Left cardiac atrium (tissue), 4 donors: ENCODE measurements at regions of chr9 and their contacts with region 1.

Region 1: DNA sequence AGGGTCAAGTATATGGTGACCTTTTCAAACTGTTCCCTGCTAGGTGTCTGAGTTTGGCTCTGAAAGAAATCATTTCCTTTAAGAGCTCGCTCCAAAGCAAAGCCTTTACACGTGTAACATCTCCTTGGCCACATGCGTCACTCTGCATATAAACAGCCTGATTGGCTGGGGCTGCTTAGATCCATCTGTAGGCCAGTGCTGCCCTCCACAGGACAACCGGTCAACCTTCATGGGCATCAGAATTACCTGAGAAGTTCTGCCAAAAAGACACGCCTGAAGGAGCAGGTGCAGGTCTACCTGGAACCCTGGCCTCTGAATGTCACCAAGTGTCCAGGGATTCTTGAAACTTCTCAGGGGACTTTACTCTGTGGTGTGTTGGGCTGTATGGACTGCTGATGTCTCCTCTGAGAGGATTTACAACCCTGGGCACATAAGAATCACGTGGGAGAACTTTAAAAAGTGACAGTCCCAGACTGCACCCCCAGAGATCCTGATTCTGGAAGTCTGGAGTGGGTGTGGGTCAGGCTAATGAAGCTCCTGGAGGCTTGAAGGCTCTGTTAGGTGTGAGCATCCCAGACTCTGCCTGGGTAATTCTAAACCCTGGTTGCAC is 497.6 kb downstream of the GADD45G start:
- DNase-seq: peak; percentile 85
- ATAC-seq: peak; percentile 93

Region 2: DNA sequence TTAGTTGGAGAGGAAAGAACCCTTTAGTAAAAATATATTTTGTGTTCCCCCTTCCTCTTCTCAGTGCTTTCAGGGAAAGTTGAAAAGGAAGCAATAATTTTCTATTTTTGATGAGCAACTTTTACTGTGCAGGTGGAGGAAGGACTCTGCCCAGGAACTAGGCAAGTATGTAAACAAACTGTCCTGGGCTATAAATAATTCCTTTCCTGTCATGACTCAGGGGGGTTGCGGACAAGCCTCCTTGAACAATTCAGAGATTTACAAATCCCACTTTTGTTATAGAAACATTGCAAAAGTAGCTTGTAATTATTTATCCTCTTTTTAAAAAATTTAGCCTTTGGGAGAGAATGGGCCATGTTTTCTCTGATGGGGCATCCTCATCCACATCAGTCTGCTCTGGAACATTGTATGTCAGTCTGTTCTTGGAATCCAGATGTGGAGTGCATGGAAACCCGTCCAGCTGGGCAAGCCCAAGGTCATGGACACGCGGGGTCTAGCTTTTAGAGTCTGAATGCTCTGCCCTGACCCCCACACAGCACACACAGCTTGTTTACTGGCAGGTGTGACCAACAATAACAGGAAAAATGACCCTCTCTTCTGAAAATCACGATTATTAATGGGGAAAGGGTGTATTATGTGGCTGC is 370.0 kb before region 1 on chr9:
- intact Hi-C with region 1: loop called in 1 of 2 experiments (anchors 5 kb)
- DNase-seq: no peak
- ATAC-seq: peak in 1 of 2 donors; percentile 33

Region 3: GRCh38 chr9:89750147-89750861 is 352.1 kb before region 1 on chr9:
- intact Hi-C with region 1: loop called in 1 of 2 experiments (anchors 10 kb)
- DNase-seq: peak; percentile 59
- ATAC-seq: peak; percentile 69 to 71

Region 4: DNA sequence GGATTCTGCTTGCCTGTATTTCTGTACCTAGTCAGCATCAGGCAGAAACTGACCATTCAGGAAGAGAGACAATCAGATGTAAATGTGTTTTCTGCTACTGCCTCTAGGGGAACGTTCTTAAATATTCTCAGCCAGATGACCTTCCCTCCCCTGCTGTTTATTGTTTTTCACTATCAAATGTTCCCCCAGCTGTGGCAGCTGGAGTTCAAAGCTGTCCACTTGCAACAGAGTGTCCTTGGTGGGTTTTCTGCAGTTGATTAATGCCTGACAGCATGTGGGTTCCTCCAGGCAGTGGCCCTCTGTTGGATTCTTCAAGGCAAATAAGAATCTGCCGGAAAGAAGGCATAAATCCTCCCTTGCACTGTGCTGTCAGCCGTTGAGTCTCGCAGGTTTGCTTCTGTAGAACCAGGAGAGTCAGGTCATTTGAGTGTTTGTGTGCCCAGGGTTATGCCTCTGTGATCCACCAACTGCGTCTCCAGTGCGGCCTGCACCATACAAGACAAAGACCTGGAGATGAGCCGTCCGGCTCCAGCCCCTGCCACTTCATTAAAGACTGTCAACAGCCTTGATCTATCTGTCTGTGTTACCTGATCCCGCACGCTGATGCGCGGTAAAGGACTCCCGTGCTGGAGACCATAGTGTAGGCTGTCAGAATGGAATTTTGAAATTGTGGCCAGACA is 294.2 kb before region 1 on chr9:
- intact Hi-C with region 1: loop called in 1 of 2 experiments (anchors 10 kb)
- DNase-seq: no peak
- ATAC-seq: no peak

Region 5: DNA sequence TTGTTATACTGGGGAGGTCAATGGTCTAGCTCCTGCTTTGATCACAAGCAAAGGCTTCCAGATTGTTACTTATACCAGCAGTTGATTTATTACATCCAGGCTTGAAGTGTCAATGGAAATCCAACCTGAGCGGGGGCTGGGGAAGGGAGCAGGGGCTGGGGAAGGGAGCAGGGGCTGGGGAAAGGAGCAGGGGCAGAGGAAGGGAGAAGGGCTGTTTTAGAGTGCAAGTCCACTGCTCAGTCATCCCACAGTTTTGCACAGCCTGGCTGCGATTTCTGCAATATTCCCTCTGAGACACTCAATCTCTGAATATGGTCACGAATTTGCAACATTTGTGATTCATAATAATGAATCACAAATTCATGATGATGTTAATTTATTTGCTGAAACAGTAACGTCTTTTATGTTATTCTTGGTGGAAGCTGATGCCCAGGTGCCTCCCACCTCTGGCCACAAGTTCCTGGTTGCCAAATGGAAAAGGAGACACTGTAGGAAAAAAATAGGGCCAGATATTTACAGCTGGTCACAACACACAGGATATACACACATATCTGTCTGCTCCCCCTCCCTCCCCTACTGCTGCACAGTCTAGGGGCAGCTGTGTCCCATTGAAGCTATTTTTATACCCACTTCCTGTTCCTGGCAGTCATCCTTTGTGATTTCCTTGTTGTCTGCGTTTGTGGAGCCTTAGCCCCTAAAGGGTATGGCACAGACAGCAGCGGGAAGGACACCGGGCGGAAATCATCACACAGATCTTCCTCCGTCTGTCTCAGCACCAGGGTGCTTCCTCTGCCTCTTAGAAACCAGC is 172.5 kb before region 1 on chr9:
- intact Hi-C with region 1: loop called in 1 of 2 experiments (anchors 10 kb)
- DNase-seq: no peak
- ATAC-seq: peak; percentile 71 to 89

Region 6: GRCh38 chr9:89999534-90000370 is 102.6 kb before region 1 on chr9:
- intact Hi-C with region 1: loop called (anchors 2 to 10 kb)
- DNase-seq: peak; percentile 71
- ATAC-seq: peak; percentile 86 to 88

Region 7: GRCh38 chr9:90180381-90180780 is 78.0 kb after region 1 on chr9:
- intact Hi-C with region 1: no loop called
- DNase-seq: no peak
- ATAC-seq: no peak

Region 8: DNA sequence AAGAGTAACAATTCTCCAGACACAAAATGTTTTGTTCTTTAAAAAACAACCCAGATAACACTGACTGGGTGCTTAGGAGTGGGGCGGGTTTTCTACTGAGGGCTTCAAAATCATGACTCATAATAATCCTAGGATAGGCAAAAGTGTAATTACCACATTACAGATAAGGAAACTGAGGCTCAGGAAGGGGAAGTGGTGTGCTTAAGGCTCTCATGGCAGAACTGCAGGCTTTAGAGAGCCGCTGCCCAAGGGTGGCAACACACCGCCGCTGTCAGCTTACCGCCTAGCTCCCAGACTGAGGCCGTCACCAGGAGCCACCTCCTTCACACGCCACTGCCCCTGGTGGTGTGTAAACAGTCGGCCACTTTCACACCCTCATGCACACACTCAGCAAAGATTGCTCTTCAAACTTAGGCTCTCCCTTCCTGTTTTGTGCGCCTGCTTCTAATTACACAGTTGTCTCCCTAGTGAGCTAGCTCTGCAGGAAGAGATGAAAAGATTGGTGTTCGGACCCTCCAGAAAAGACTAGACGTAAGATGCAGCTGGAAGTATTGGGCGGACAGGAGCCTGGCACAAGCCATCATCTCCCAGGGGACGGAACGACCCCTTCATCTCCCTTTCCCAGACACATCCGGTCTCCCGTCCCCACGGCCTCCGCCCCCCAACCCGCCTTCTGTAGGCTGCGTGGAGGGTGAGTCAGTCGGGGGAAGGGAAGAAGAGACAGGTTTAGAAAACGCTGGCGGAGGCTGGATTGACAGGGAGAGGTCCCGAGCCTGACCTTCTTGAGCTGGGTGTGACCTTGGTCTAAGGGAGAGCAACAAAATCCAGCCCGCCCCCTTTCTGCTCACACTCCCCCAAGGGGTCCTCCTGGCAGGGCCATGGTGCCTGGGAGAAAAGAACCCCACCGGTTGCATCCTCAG is 862.0 kb after region 1 on chr9:
- intact Hi-C with region 1: no loop called
- DNase-seq: no peak
- ATAC-seq: peak in 1 of 2 donors; percentile 45